ENCODE measurements at regions of chr16 and their contacts with region 1.

Region 1: GRCh38 chr16:50665128-50665878 is 15.8 kb downstream of the SNX20 start:
- DNase-seq: peak; percentile 77
- H3K4me3 ChIP-seq: peak overlapping the region; percentile 42 to 76 (median 72)
- H3K27ac ChIP-seq: no peak overlapping the region
- H3K4me1 ChIP-seq: peaks cover 3% of the 10 kb centered on the region
- H3K27me3 ChIP-seq: no peaks in the 10 kb centered on the region
- CTCF ChIP-seq: peak; percentile 77 to 80
- POLR2A ChIP-seq: no peak

Region 2: DNA sequence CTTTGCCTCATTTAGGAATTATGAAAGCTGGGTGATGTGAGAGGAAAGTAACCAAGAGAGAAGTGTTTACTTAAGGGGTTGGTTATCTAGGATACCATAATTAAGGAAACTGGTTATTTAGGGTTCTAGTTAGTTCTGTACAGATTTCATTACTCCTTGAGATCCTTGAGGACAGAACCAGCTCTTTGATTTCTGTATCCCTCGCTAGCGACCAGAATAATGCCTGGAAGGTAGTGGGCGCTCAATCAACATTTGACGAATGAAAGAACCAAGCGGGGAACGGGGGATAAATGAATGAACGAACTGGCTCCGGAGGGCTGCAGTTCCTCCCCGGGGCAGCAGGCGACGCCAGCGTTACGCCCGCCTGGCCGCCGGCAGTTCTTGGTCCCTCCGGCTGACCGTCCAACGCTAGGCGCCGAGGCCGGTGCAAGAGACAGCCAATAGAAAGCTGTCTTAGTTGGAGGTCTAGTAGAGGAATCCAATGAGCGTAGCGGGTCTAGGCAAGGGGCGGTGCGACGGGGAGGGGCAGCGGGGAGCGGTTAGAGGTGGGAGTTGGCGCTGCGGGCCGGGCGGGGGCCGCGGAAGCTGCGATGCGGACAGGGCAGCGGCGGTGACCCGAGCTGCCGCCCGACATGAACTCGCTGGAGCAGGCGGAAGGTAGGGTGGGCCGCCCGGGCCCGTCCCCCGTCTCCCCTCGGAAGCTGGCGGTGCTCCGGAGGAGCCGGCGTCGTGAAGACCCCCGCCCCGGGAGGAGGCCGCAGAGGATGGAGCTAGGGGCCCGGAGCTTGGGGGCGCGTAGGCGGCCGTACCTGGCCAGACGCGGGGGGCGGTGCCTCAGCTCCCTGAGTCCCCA is 640.4 kb before region 1 on chr16 and contains the start of gene CNEP1R1:
- CTCF ChIA-PET with region 1: interaction called, 37 read pairs
- POLR2A ChIA-PET with region 1: no interaction called
- dilution Hi-C with region 1: no loop called
- intact Hi-C with region 1: loop called (anchors 1 kb)
- DNase-seq: peak; percentile 98
- H3K4me3 ChIP-seq: peak within 1 kb of the TSS; percentile 86 to 94 (median 93)
- H3K27ac ChIP-seq: peak within 1 kb of the TSS; percentile 8
- H3K4me1 ChIP-seq: peaks cover 13% of the 10 kb centered on the region
- H3K27me3 ChIP-seq: peaks cover 2 to 6% of the 10 kb centered on the region in 2 experiments
- CTCF ChIP-seq: peak; percentile 99 to 100
- POLR2A ChIP-seq: peak; percentile 63
- total RNA-seq, gene CNEP1R1: 21.7 and 23.2 TPM in 2 replicates

Region 3: GRCh38 chr16:50245417-50246298 is 419.6 kb before region 1 on chr16:
- CTCF ChIA-PET with region 1: interaction called, 12 read pairs
- POLR2A ChIA-PET with region 1: no interaction called
- dilution Hi-C with region 1: no loop called
- intact Hi-C with region 1: loop called (anchors 1 kb)
- DNase-seq: peak; percentile 16
- H3K4me3 ChIP-seq: peak overlapping the region; percentile 46 to 79 (median 64)
- H3K27ac ChIP-seq: no peak overlapping the region
- H3K4me1 ChIP-seq: peaks cover 9% of the 10 kb centered on the region
- H3K27me3 ChIP-seq: peaks cover 3% of the 10 kb centered on the region in 2 experiments
- CTCF ChIP-seq: peak in 1 of 2 donors; percentile 18
- POLR2A ChIP-seq: no peak

Region 4: DNA sequence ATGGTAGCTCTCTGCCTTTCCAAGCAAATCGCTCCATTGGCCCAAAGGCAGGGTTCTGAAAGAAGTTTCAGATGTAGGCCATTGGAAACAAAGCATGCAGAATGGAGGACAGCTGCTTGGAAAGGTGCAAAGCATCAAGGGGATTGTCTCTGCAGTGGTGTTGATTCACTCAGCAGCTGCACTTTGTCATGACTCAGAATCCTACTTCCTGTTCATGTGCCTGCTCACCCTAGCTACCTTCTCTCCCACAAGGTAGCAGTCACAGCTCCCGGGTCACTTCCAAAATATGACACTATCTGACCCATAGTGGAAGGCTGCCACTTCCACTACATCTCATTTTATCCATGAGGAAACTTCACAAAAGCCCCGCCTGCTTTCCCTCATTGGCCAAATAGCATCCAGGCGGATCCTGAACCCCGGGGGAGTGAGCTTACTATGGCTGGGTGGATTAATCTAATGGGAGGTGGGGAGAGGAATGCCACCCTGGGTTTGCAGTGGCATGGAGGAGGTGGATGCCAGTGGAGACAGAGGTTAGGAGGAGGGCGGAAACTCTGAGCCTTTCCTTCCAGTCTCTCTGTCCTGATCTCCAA is 191.9 kb before region 1 on chr16:
- CTCF ChIA-PET with region 1: interaction called, 3 read pairs
- POLR2A ChIA-PET with region 1: no interaction called
- dilution Hi-C with region 1: no loop called
- intact Hi-C with region 1: loop called (anchors 5 kb)
- DNase-seq: no peak
- H3K4me3 ChIP-seq: no peak overlapping the region
- H3K27ac ChIP-seq: no peak overlapping the region
- H3K4me1 ChIP-seq: no peaks in the 10 kb centered on the region
- H3K27me3 ChIP-seq: peaks cover 9 to 12% of the 10 kb centered on the region in 2 experiments
- CTCF ChIP-seq: no peak
- POLR2A ChIP-seq: no peak

Region 5: DNA sequence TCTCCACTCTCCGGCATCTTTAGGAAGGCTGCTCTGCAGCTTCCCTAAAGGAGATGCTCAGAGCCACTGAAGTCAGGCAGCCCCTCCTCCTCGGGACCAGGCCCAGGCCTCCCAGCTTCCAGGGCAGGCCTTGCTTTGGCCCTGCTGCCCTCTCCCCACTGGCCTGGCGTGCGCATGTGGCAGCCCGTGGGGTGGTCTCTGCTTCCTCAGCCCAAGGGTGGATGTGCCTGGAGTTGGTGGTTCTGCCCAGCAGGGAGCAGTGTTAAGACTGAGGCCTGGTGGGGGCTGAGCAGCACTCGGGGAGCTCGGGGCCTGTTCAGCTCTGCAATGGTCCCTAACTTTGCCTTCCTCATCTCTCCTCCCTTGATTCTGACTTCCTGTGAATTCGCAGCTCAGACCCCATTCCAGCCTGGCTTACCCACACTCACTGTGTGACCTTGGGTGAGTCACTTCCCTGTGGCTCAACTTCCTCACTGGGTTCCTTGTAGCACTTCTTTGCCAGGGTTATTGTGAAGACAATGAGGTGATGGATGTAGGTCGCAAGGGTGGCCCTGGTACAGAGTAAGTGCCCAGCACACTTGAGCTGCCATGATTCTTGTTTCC is 53.9 kb before region 1 on chr16:
- CTCF ChIA-PET with region 1: interaction called, 54 read pairs
- POLR2A ChIA-PET with region 1: no interaction called
- dilution Hi-C with region 1: no loop called
- intact Hi-C with region 1: loop called (anchors 5 kb)
- DNase-seq: peak; percentile 58
- H3K4me3 ChIP-seq: no peak overlapping the region
- H3K27ac ChIP-seq: no peak overlapping the region
- H3K4me1 ChIP-seq: peaks cover 12% of the 10 kb centered on the region
- H3K27me3 ChIP-seq: no peaks in the 10 kb centered on the region
- CTCF ChIP-seq: peak in 1 of 2 donors; percentile 27
- POLR2A ChIP-seq: no peak

Region 6: GRCh38 chr16:50696575-50697420 is 31.5 kb after region 1 on chr16:
- CTCF ChIA-PET with region 1: interaction called, 10 read pairs
- POLR2A ChIA-PET with region 1: no interaction called
- dilution Hi-C with region 1: no loop called
- intact Hi-C with region 1: no loop called
- DNase-seq: no peak
- H3K4me3 ChIP-seq: no peak overlapping the region
- H3K27ac ChIP-seq: no peak overlapping the region
- H3K4me1 ChIP-seq: no peaks in the 10 kb centered on the region
- H3K27me3 ChIP-seq: no peaks in the 10 kb centered on the region
- CTCF ChIP-seq: no peak
- POLR2A ChIP-seq: no peak

Measured in endothelial cell of umbilical vein (primary cell).